Mammary epithelial cell (primary cell): ENCODE measurements at regions of chr12 and their contacts with region 1.

Region 1: GRCh38 chr12:94710933-94711332 is 60.6 kb upstream of the TMCC3 start:
- DNase-seq: peak; percentile 29
- H3K4me3 ChIP-seq: no peak overlapping the region
- H3K27ac ChIP-seq: no peak overlapping the region
- H3K4me1 ChIP-seq: peaks cover 5% of the 10 kb centered on the region
- H3K27me3 ChIP-seq: no peaks in the 10 kb centered on the region
- CTCF ChIP-seq: peak; percentile 31 to 35

Region 2: GRCh38 chr12:94615284-94616181 is 95.4 kb before region 1 on chr12:
- CTCF ChIA-PET with region 1: no interaction called
- dilution Hi-C with region 1: no loop called
- in situ Hi-C with region 1: no loop called
- intact Hi-C with region 1: no loop called
- DNase-seq: peak; percentile 93
- H3K4me3 ChIP-seq: peak overlapping the region; percentile 16 to 44 (median 43)
- H3K27ac ChIP-seq: peak overlapping the region; percentile 95
- H3K4me1 ChIP-seq: peaks cover 61% of the 10 kb centered on the region
- H3K27me3 ChIP-seq: no peaks in the 10 kb centered on the region
- CTCF ChIP-seq: no peak

Region 3: GRCh38 chr12:94699801-94700200 is 11.1 kb before region 1 on chr12:
- CTCF ChIA-PET with region 1: interaction called, 10 read pairs
- dilution Hi-C with region 1: no loop called
- in situ Hi-C with region 1: no loop called
- intact Hi-C with region 1: no loop called
- DNase-seq: peak; percentile 64
- H3K4me3 ChIP-seq: no peak overlapping the region
- H3K27ac ChIP-seq: no peak overlapping the region
- H3K4me1 ChIP-seq: no peaks in the 10 kb centered on the region
- H3K27me3 ChIP-seq: no peaks in the 10 kb centered on the region
- CTCF ChIP-seq: no peak

Region 4: GRCh38 chr12:94732367-94732990 is 21.5 kb after region 1 on chr12:
- CTCF ChIA-PET with region 1: no interaction called
- dilution Hi-C with region 1: no loop called
- in situ Hi-C with region 1: no loop called
- intact Hi-C with region 1: no loop called
- DNase-seq: no peak
- H3K4me3 ChIP-seq: no peak overlapping the region
- H3K27ac ChIP-seq: no peak overlapping the region
- H3K4me1 ChIP-seq: no peaks in the 10 kb centered on the region
- H3K27me3 ChIP-seq: peaks cover 3% of the 10 kb centered on the region
- CTCF ChIP-seq: no peak

Region 5: GRCh38 chr12:94753036-94753679 is 42.2 kb after region 1 on chr12:
- CTCF ChIA-PET with region 1: no interaction called
- dilution Hi-C with region 1: no loop called
- in situ Hi-C with region 1: no loop called
- intact Hi-C with region 1: no loop called
- DNase-seq: peak; percentile 70
- H3K4me3 ChIP-seq: no peak overlapping the region
- H3K27ac ChIP-seq: no peak overlapping the region
- H3K4me1 ChIP-seq: no peaks in the 10 kb centered on the region
- H3K27me3 ChIP-seq: no peaks in the 10 kb centered on the region
- CTCF ChIP-seq: peak; percentile 7 to 44